Right ventricle myocardium inferior (tissue), 1 donor: ENCODE measurements at regions of chr12 and their contacts with region 1.

Region 1: GRCh38 chr12:67648521-67649260 is at the start of gene DYRK2:
- DNase-seq: peak; percentile 93
- ATAC-seq: peak; percentile 77
- total RNA-seq, gene DYRK2: 51.2 TPM

Region 2: GRCh38 chr12:67457778-67458177 is 190.9 kb before region 1 on chr12:
- intact Hi-C with region 1: loop called (anchors 5 kb)
- DNase-seq: no peak
- ATAC-seq: peak; percentile 62

Region 3: DNA sequence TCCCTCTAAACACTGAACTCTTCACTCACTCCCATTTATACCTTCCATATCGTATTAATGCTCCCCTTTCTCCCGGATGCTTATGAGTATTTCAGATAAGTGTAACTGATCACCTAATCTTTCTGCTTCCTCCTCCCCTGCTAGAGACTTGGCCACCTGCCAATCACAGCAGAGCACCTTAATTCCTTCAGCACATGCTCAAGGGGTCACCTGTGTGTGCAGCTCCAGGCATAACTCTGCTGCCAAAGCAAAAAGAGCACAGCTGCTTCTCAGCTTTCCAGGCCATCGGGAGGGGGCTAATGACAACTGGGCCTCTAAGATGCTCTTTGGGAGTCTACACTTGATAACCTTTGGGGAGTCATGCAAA is 107.1 kb before region 1 on chr12:
- intact Hi-C with region 1: no loop called
- DNase-seq: no peak
- ATAC-seq: no peak

Region 4: DNA sequence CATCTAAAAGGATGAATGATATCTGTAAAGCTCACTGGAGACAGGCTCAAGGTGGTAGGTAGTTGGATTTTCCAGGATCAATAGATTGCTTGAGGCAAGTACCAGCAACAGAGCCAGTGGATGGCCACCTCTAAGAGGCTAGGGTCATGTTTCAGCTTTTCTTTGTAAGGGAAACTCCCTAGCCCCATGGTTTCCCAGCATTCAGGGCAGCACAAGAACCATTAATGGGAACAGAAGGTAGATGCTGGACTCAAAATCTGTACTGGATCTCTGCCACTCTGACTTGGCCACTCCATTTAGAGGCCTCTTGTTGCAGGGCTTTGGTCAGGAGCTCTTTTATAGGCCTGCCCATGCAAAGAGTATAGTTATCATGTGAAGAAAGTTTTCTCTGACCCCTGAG is 76.2 kb before region 1 on chr12:
- intact Hi-C with region 1: no loop called
- DNase-seq: no peak
- ATAC-seq: no peak

Region 5: GRCh38 chr12:67720351-67720856 is 71.7 kb after region 1 on chr12:
- intact Hi-C with region 1: loop called (anchors 2 kb)
- DNase-seq: no peak
- ATAC-seq: peak; percentile 62

Region 6: GRCh38 chr12:67827820-67828383 is 179.2 kb after region 1 on chr12:
- intact Hi-C with region 1: loop called (anchors 5 kb)
- DNase-seq: no peak
- ATAC-seq: peak; percentile 89